ENCODE measurements at regions of chr7 and their contacts with region 1.

Region 1: DNA sequence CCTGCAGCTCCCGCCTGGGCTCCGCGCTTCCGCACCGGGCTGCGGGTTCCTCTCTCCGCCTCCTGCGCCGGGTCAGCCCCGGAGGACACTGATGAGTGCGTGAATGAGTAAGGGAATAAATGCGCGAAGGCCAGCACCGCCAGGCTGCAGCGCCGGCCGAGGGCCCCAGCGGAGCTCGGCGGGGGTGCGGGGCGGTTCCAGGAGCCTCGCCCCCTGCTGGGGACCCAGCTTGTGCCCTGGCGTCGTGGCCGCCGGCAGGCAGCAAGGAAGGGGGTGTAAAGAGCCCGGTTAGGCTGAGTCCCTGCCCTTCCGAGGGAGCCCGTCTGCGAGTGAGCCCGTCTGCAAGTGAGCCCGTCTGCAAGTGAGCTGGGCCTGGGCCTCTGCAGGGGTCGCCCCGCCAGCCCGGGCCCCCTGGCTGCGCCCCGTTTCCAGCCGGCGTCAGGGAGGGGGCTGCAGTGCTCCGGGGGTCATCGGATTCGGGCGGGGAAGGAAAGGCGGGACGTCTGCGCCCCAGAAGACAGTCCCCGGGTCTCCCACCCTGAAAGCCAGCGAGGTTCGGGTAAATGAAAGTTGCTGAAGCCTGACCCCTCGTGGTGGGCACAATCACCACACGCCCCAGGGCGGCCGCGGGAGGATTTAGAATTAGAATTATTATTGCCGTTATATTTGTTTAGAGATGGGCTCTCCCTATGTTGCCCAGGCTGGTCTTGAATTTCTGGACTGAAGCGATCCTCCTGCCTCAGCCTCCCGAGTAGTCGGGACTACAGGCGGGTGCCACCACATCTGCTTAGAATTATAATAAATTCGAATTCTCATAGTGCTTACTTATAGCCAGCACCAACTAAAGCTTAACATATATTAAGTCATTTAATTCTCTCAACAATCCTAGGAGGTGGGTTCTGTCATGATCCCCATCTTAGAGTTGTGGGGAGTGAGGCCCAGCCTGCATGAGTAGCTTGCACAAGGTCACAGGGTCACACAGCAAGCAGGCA is 8.6 kb upstream of the CRYGN start:
- DNase-seq: peak; percentile 83
- ATAC-seq: peak; percentile 85
- H3K4me3 ChIP-seq: peak overlapping the region in 4 of 5 experiments; percentile 53 to 79 (median 60)
- H3K4me3 Mint-ChIP-seq: peak overlapping the region; percentile 87
- H3K27ac ChIP-seq: no peak overlapping the region
- H3K27ac Mint-ChIP-seq: no peak overlapping the region
- H3K4me1 ChIP-seq: peaks cover 0 to 8% of the 10 kb centered on the region in 2 donors
- H3K4me1 Mint-ChIP-seq: peaks cover 1% of the 10 kb centered on the region
- H3K27me3 ChIP-seq: peaks cover 0 to 8% (median 2%) of the 10 kb centered on the region in 4 experiments
- H3K27me3 Mint-ChIP-seq: peaks cover 38% of the 10 kb centered on the region
- CTCF ChIP-seq: peak; percentile 85

Region 2: GRCh38 chr7:151341357-151342101 is 107.0 kb before region 1 on chr7 and contains the start of gene NUB1:
- CTCF ChIA-PET with region 1: interaction called, 13 read pairs
- POLR2A ChIA-PET with region 1: no interaction called
- intact Hi-C with region 1: no loop called
- DNase-seq: peak; percentile 93
- ATAC-seq: peak; percentile 95
- H3K4me3 ChIP-seq: peak within 1 kb of the TSS; percentile 62 to 100 (median 84)
- H3K4me3 Mint-ChIP-seq: peak within 1 kb of the TSS; percentile 88
- H3K27ac ChIP-seq: peak within 1 kb of the TSS; percentile 79 to 80
- H3K27ac Mint-ChIP-seq: peak within 1 kb of the TSS; percentile 95
- H3K4me1 ChIP-seq: peaks cover 29 to 36% of the 10 kb centered on the region in 2 donors
- H3K4me1 Mint-ChIP-seq: peaks cover 36% of the 10 kb centered on the region
- H3K27me3 ChIP-seq: no peaks in the 10 kb centered on the region
- H3K27me3 Mint-ChIP-seq: no peaks in the 10 kb centered on the region
- CTCF ChIP-seq: no peak
- total RNA-seq, gene NUB1: 95.4 and 104 TPM in 2 replicates

Region 3: DNA sequence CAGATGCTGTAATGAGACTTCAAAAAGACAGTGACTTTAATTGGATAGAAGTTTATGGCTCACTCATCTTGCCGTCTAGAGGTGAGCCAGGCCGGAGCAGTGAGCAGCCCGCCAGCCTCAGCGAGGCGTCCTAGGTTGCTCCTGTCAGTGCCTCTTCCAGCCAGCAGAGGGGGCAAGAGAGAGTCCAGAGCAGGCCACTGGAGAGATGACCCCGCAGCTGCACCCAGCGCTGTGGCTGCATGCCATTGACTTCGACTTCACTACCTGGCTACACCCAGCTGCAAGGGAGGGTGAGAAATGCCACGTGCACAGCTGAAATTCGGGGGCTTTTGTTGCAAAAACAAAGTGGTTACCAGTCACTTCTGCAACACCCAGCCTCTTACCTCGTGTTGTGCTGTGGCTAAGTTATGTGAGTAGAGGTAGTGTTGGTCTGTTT is 80.4 kb before region 1 on chr7:
- CTCF ChIA-PET with region 1: interaction called, 230 read pairs
- POLR2A ChIA-PET with region 1: interaction called, 3 read pairs
- intact Hi-C with region 1: loop called (anchors 1 kb)
- DNase-seq: peak; percentile 85
- ATAC-seq: peak; percentile 100
- H3K4me3 ChIP-seq: no peak overlapping the region
- H3K4me3 Mint-ChIP-seq: no peak overlapping the region
- H3K27ac ChIP-seq: no peak overlapping the region
- H3K27ac Mint-ChIP-seq: peak overlapping the region; percentile 13
- H3K4me1 ChIP-seq: peaks cover 0 to 5% of the 10 kb centered on the region in 2 donors
- H3K4me1 Mint-ChIP-seq: peaks cover 8% of the 10 kb centered on the region
- H3K27me3 ChIP-seq: no peaks in the 10 kb centered on the region
- H3K27me3 Mint-ChIP-seq: no peaks in the 10 kb centered on the region
- CTCF ChIP-seq: peak; percentile 94

Region 4: DNA sequence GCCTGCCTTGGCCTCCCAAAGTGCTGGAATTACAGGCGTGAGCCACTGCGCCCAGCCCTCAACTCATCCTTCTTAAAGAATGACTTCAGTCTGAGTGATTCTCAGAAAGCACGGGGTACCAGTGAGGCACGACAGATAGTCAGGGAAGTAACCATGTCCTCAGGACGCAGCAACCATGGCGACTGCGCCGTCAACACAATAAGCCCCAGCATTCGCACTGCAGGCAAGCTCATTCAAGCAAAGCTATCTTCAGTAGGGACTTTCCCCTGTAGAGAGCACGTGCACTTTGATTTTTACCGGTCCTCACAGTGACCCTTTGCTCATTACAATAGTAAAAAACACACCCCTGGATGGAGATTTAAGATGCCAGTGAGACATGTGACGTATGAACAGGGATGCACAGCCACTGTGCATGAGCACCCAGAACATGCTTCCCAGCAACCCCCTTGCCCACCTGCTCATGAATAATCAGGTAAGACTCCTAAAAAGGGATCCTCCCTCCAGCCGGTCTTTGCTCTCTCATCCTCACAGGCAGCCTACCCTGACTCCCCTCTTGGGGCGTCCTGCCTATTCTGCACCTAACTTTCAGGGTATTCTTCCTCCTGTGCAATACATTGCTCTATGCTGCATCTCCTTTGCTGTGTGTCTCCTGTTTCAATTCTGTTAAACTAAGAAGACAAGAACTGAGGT is 47.8 kb before region 1 on chr7:
- CTCF ChIA-PET with region 1: interaction called, 12 read pairs
- POLR2A ChIA-PET with region 1: no interaction called
- intact Hi-C with region 1: loop called (anchors 1 kb)
- DNase-seq: peak; percentile 90
- ATAC-seq: peak; percentile 94
- H3K4me3 ChIP-seq: no peak overlapping the region
- H3K4me3 Mint-ChIP-seq: peak overlapping the region; percentile 64
- H3K27ac ChIP-seq: peak overlapping the region in 1 of 2 donors; percentile 35
- H3K27ac Mint-ChIP-seq: peak overlapping the region; percentile 91
- H3K4me1 ChIP-seq: peaks cover 13 to 16% of the 10 kb centered on the region in 2 donors
- H3K4me1 Mint-ChIP-seq: peaks cover 30% of the 10 kb centered on the region
- H3K27me3 ChIP-seq: peaks cover 0 to 5% (median 1%) of the 10 kb centered on the region in 4 experiments
- H3K27me3 Mint-ChIP-seq: no peaks in the 10 kb centered on the region
- CTCF ChIP-seq: no peak

Region 5: DNA sequence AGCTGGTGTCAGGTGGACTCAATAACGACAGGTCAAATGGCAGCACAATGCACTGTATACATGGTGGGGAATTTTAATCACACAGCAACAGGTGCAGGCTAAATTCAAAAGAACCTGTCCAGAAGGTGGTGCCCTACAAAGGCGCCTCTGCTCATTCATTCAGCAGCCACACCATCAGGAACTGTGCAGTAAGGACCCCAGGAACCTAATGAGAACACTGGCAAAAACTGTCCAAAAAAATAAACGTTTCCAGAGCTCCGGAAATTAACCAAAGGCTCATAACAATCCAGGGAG is 13.3 kb after region 1 on chr7:
- CTCF ChIA-PET with region 1: interaction called, 11 read pairs
- POLR2A ChIA-PET with region 1: no interaction called
- intact Hi-C with region 1: no loop called
- DNase-seq: no peak
- ATAC-seq: no peak
- H3K4me3 ChIP-seq: no peak overlapping the region
- H3K4me3 Mint-ChIP-seq: no peak overlapping the region
- H3K27ac ChIP-seq: no peak overlapping the region
- H3K27ac Mint-ChIP-seq: no peak overlapping the region
- H3K4me1 ChIP-seq: no peaks in the 10 kb centered on the region
- H3K4me1 Mint-ChIP-seq: no peaks in the 10 kb centered on the region
- H3K27me3 ChIP-seq: peaks cover 0 to 8% (median 0%) of the 10 kb centered on the region in 4 experiments
- H3K27me3 Mint-ChIP-seq: no peaks in the 10 kb centered on the region
- CTCF ChIP-seq: no peak

Measured in B cell (primary cell).